ENCODE measurements at regions of chr1 and their contacts with region 1.

Region 1: GRCh38 chr1:18919197-18919905 is 17.0 kb upstream of the ALDH4A1 start:
- DNase-seq: no peak
- H3K4me3 ChIP-seq: no peak overlapping the region
- H3K27ac ChIP-seq: no peak overlapping the region
- H3K4me1 ChIP-seq: peaks cover 29% of the 10 kb centered on the region
- H3K27me3 ChIP-seq: no peaks in the 10 kb centered on the region
- CTCF ChIP-seq: no peak

Region 2: DNA sequence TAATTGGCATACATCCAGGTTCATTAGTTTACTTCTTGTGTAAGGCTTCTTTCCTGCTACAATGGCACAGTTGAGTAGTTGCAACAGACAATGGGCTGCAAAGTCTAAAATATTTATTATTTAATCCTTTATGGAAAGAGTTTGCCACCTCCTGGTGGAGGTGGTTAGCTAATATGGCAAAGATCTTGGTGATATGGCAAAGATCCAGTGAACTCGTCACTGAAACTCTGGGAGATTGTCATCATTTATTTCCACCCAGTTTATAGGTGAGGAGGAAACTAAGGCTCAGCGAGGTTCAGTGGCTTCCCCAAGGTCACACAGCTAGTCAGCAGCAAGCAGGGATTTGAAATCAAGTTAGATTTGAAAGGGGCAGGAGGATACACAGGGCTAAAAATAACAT is 53.2 kb after region 1 on chr1:
- CTCF ChIA-PET with region 1: no interaction called
- dilution Hi-C with region 1: no loop called
- in situ Hi-C with region 1: no loop called
- intact Hi-C with region 1: no loop called
- DNase-seq: peak; percentile 52
- H3K4me3 ChIP-seq: no peak overlapping the region
- H3K27ac ChIP-seq: no peak overlapping the region
- H3K4me1 ChIP-seq: peaks cover 4% of the 10 kb centered on the region
- H3K27me3 ChIP-seq: no peaks in the 10 kb centered on the region
- CTCF ChIP-seq: peak; percentile 18 to 51

Region 3: GRCh38 chr1:19021845-19022244 is 102.5 kb after region 1 on chr1:
- CTCF ChIA-PET with region 1: no interaction called
- dilution Hi-C with region 1: loop called (anchors 5 kb)
- in situ Hi-C with region 1: no loop called
- intact Hi-C with region 1: no loop called
- DNase-seq: no peak
- H3K4me3 ChIP-seq: no peak overlapping the region
- H3K27ac ChIP-seq: no peak overlapping the region
- H3K4me1 ChIP-seq: no peaks in the 10 kb centered on the region
- H3K27me3 ChIP-seq: no peaks in the 10 kb centered on the region
- CTCF ChIP-seq: no peak

Region 4: GRCh38 chr1:19635646-19636045 is 716.3 kb after region 1 on chr1:
- CTCF ChIA-PET with region 1: no interaction called
- dilution Hi-C with region 1: no loop called
- in situ Hi-C with region 1: no loop called
- intact Hi-C with region 1: no loop called
- DNase-seq: no peak
- H3K4me3 ChIP-seq: no peak overlapping the region
- H3K27ac ChIP-seq: no peak overlapping the region
- H3K4me1 ChIP-seq: peaks cover 17% of the 10 kb centered on the region
- H3K27me3 ChIP-seq: no peaks in the 10 kb centered on the region
- CTCF ChIP-seq: no peak